A549 (cell line): ENCODE measurements at regions of chr20 and their contacts with region 1.

Region 1: DNA sequence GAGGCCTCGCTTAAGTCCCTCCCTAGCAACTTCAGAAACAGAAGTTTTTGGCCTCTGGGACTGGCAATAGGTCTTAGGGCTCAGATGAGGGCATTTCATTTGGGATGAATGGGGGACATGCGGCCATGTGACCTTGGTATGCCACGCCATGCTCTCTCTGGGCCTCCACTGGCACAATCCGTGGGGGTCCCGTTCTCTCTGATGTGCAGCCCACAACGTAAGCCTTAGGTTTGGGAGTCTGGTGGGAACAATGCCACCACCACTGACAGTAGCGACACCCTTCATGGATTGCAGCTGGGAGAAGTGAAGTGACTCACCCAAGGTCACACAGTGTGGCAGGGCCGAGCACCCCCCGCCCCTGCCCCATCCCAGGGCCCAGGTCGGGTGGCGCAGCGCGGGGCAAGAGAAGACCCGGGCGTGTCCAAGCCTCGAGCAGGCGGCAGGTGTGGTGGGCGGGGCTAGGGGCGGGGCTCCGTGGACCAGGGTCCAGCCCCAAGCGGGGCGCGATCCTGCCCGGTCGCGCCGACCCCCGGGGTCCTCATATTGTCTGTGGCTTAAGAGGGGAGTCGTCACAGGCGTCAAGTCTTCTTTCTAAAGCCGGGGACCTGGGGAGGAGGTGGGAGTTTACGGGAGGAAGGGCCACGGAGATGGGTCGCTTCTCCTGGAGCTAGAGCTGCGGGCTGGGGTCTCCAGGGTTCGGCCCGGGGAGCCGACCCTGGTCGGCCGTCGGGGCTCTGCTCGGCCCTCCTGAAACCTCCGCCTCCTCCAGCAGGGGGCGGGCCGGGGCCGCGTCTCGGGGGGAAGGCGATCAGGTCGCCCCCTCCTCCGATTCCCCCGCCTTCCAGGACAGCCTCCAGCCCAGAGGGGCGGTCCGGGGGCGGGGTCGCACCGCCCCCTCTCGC is 698 bp upstream of the CEBPB start:
- DNase-seq: peak; percentile 79 to 87
- ATAC-seq: peak; percentile 22 to 45
- H3K4me3 ChIP-seq: peak overlapping the region; percentile 98
- H3K27ac ChIP-seq: peak overlapping the region; percentile 97 to 98
- H3K4me1 ChIP-seq: peaks cover 51% of the 10 kb centered on the region
- CTCF ChIP-seq: peak; percentile 70
- EP300 ChIP-seq: no peak
- POLR2A ChIP-seq: no peak
- RAD21 ChIP-seq: peak; percentile 71 to 89

Region 2: DNA sequence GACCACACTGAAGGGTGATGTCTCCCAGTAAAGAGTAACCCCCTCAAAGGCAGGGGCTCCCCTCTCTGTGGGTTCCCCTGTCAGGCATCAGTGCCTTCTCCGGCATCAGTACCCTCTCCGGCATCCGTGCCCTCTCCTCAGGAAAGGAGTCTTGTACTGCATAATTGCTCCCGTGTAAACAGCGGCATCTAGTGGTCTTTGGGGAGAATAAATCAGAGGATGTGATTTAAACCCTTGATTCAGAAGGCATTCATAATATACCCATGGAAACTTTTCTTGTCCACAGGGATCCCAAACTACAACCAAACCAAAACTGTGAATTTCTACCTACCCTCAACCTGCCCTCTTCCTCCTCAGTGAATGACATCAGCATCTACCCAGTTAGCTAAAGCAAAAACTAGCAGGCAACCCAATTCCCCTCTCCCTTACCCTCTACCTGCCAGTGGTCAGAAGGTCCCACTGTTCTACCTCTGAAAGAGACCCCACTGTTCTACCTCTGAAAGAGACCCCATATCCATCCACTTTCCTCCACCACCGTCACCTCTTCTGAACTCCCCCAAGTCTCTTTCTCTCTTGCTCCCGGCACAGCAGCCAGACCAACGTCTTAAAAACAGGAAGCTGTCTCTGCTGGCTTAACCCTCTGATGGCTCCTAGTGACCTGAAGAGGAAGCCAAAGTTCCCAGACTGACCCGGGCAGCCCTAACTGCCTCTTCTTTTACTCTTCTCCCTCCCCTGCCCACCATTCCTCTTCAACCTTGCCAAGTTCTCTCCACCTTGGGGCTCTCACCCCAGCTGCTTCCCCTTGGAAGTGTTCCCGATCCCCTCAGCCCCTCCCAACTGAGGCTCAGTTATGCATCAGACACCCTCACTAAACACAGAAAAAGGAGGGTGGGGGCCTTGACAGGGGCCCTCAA is 104.2 kb before region 1 on chr20:
- CTCF ChIA-PET with region 1: no interaction called
- POLR2A ChIA-PET with region 1: no interaction called
- DNase-seq: peak; percentile 70 to 81
- ATAC-seq: peak; percentile 87 to 91
- H3K4me3 ChIP-seq: no peak overlapping the region
- H3K27ac ChIP-seq: peak overlapping the region; percentile 19 to 69; a peak in 4 of 6 replicates
- H3K4me1 ChIP-seq: peaks cover 29% of the 10 kb centered on the region
- CTCF ChIP-seq: peak; percentile 92
- EP300 ChIP-seq: no peak
- POLR2A ChIP-seq: no peak
- RAD21 ChIP-seq: peak; percentile 72 to 81

Region 3: DNA sequence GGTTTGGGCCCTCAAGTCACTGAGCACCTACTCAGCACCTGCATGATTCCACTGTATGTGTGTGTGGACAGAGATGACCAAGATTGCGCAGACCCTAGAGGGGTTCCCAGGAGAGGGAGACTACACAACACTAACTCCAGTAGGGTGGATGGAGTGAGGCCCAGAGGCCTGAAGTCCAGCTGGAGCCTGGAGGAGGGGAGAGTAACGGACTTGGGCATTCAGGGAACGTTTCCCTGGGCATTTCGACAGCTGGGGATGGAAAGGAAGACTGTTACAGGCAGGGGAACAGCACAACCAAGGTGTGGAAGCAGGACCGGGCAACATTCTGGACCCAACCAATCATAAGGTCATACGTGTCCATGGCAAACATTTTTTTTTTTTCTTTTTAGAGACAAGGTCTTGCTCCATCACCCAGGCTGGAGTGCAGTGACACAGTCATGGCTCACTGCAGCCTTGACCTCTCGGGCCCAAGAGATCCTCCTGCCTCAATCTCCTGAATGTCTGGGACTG is 10.4 kb before region 1 on chr20:
- CTCF ChIA-PET with region 1: interaction called, 26 read pairs
- POLR2A ChIA-PET with region 1: interaction called, 6 read pairs
- DNase-seq: no peak
- ATAC-seq: peak; percentile 73 to 76
- H3K4me3 ChIP-seq: no peak overlapping the region
- H3K27ac ChIP-seq: peak overlapping the region; percentile 43 to 73; a peak in 5 of 6 replicates
- H3K4me1 ChIP-seq: peaks cover 4% of the 10 kb centered on the region; the same call in 1 of the 3 replicates
- CTCF ChIP-seq: no peak; the same call in 1 of the 3 replicates
- EP300 ChIP-seq: no peak
- POLR2A ChIP-seq: no peak
- RAD21 ChIP-seq: no peak

Region 4: DNA sequence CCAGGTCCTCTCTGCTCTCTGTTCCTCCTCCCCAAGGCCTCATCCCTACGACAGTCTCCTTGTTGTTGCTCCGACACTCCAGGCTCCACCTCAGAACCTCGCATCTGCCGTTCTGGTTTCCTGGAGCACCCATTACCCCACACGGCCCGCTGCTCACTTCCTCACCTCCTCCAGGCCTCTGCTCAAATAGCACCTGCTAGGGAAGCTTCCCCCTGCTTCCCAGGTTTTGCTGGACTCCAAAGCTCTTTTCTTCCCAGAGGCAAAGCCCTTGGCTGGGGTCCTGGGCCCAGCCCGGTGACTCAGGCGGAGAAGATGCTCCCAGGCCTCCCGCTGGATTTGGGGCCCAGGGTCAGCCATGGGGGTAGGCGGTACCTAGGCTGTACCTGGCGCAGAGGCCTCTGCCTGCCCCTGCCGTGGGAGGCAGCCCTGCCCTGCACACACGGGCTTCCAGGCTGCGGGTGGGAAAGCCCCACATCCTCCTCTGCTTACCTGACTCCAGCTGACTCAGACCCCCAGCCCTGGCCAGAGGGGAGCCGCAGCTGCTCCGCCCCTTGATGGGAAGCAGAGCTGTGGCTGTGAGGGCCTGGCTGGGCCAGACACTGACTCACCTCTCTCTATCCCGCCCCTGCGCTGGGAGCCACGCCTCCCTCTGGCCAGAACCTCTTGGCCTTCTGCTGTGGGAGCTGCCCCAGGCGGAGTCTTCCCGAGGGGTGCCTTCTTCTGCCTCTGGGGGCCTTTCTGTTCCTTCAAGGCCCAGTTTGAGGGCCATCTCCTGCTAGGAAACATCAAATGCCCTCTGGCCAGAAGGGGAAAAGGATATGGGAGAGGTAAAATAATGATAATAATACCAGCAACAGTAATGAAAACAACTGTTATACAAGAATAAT is 131.2 kb after region 1 on chr20:
- CTCF ChIA-PET with region 1: interaction called, 18 read pairs
- POLR2A ChIA-PET with region 1: interaction called, 3 read pairs
- DNase-seq: peak; percentile 89 to 98
- ATAC-seq: peak; percentile 99
- H3K4me3 ChIP-seq: peak overlapping the region; percentile 76
- H3K27ac ChIP-seq: peak overlapping the region; percentile 94 to 99
- H3K4me1 ChIP-seq: peaks cover 31% of the 10 kb centered on the region
- CTCF ChIP-seq: no peak
- EP300 ChIP-seq: peak in 1 of 2 experiments; percentile 31; a peak in 1 of 5 replicates
- POLR2A ChIP-seq: peak; percentile 64
- RAD21 ChIP-seq: peak; percentile 1 to 39; a peak in 1 of 5 replicates

Region 5: DNA sequence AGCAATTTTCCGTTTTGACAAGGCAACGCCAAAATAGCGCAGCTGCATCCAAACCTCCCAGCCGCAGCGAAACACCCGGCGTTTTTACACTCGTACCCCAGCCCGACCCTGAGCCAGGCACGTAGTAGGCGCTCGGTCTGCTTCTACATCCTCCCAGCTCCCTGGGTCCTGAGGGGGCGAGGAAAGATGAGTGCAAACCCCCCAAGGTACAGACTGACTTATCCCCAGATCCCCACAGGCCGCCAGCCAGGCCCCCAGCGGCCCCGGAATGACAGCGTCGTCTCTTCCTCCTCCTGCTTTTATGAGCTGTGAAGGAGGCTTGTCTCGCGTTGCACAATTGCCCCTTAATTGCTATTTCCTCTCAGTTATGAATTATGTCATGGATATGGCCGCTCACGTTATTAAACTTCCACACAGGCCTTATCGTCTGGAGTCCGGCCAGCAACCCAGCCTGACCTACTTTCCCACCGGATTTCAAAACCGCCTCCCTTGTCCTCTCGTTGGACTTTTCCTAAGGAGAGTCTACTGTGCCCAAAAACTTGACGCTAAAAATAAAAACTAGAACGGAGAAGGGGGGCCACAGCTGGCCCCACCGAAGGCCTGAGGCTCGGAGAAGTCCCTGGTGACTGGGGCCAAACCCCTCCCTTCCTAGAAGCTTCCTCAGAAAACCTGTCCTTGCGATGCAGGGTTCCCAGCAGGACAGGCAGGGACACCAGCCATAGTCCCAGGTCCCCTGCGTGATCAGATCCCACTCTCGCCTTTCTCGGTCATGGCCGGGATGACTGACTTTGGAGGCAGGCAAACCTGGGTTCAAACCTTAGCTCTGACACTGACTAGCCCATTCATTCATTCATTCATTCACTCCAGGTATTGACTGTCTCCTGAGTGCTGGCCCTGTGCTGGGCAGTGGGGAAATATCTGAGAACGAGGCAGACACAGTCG is 189.4 kb after region 1 on chr20:
- CTCF ChIA-PET with region 1: interaction called, 10 read pairs
- POLR2A ChIA-PET with region 1: interaction called, 4 read pairs
- DNase-seq: no peak
- ATAC-seq: no peak
- H3K4me3 ChIP-seq: no peak overlapping the region
- H3K27ac ChIP-seq: peak overlapping the region; percentile 78 to 87
- H3K4me1 ChIP-seq: peaks cover 78% of the 10 kb centered on the region
- CTCF ChIP-seq: no peak
- EP300 ChIP-seq: no peak
- POLR2A ChIP-seq: no peak
- RAD21 ChIP-seq: no peak

Region 6: GRCh38 chr20:50460460-50461267 is 270.7 kb after region 1 on chr20:
- CTCF ChIA-PET with region 1: interaction called, 322 read pairs
- POLR2A ChIA-PET with region 1: interaction called, 5 read pairs
- DNase-seq: peak; percentile 86 to 95
- ATAC-seq: peak; percentile 83 to 94
- H3K4me3 ChIP-seq: no peak overlapping the region
- H3K27ac ChIP-seq: peak overlapping the region; percentile 91 to 94
- H3K4me1 ChIP-seq: peaks cover 62% of the 10 kb centered on the region
- CTCF ChIP-seq: peak; percentile 88
- EP300 ChIP-seq: no peak
- POLR2A ChIP-seq: no peak
- RAD21 ChIP-seq: peak; percentile 97 to 99

Region 7: GRCh38 chr20:50588034-50588611 is 398.2 kb after region 1 on chr20:
- CTCF ChIA-PET with region 1: interaction called, 10 read pairs
- POLR2A ChIA-PET with region 1: no interaction called
- DNase-seq: peak; percentile 72 to 90
- ATAC-seq: peak; percentile 78 to 88; a peak in 5 of 6 replicates
- H3K4me3 ChIP-seq: no peak overlapping the region
- H3K27ac ChIP-seq: 0 out of 6 replicates have a peak overlapping the region, but pooled peaks of 1 of the 2 experiments have one; percentile 4
- H3K4me1 ChIP-seq: no peaks in the 10 kb centered on the region
- CTCF ChIP-seq: peak; percentile 88
- EP300 ChIP-seq: no peak
- POLR2A ChIP-seq: no peak
- RAD21 ChIP-seq: peak; percentile 57 to 63